MCF 10A (cell line): ENCODE measurements at regions of chr12 and their contacts with region 1.

Region 1: GRCh38 chr12:10873378-10873777 is 10.7 kb downstream of the PRH1 start:
- DNase-seq: no peak
- H3K4me3 Mint-ChIP-seq: no peak overlapping the region
- H3K27ac Mint-ChIP-seq: no peak overlapping the region
- H3K4me1 Mint-ChIP-seq: no peaks in the 10 kb centered on the region
- H3K27me3 Mint-ChIP-seq: no peaks in the 10 kb centered on the region
- CTCF ChIP-seq: no peak

Region 2: GRCh38 chr12:10891937-10892336 is 18.6 kb after region 1 on chr12:
- CTCF ChIA-PET with region 1: interaction called, 3 read pairs
- POLR2A ChIA-PET with region 1: no interaction called
- intact Hi-C with region 1: loop called (anchors 1 kb)
- DNase-seq: no peak
- H3K4me3 Mint-ChIP-seq: no peak overlapping the region
- H3K27ac Mint-ChIP-seq: no peak overlapping the region
- H3K4me1 Mint-ChIP-seq: no peaks in the 10 kb centered on the region
- H3K27me3 Mint-ChIP-seq: no peaks in the 10 kb centered on the region
- CTCF ChIP-seq: no peak